Activated B cell treated with CpG ODN at 0.5 μM for 24 hours (primary cell): ENCODE measurements at regions of chr4 and their contacts with region 1.

Region 1: GRCh38 chr4:40228497-40229365 is 31.9 kb downstream of the RHOH start:
- DNase-seq: no peak
- ATAC-seq: peak; percentile 9
- H3K4me3 Mint-ChIP-seq: peak overlapping the region; percentile 25
- H3K27ac Mint-ChIP-seq: peak overlapping the region; percentile 78
- H3K4me1 Mint-ChIP-seq: peaks cover 91% of the 10 kb centered on the region
- H3K27me3 Mint-ChIP-seq: no peaks in the 10 kb centered on the region
- CTCF ChIP-seq: no peak

Region 2: GRCh38 chr4:40020221-40020943 is 208.3 kb before region 1 on chr4:
- CTCF ChIA-PET with region 1: no interaction called
- POLR2A ChIA-PET with region 1: interaction called, 10 read pairs
- intact Hi-C with region 1: no loop called
- DNase-seq: no peak
- ATAC-seq: no peak
- H3K4me3 Mint-ChIP-seq: no peak overlapping the region
- H3K27ac Mint-ChIP-seq: no peak overlapping the region
- H3K4me1 Mint-ChIP-seq: no peaks in the 10 kb centered on the region
- H3K27me3 Mint-ChIP-seq: no peaks in the 10 kb centered on the region
- CTCF ChIP-seq: no peak

Region 3: DNA sequence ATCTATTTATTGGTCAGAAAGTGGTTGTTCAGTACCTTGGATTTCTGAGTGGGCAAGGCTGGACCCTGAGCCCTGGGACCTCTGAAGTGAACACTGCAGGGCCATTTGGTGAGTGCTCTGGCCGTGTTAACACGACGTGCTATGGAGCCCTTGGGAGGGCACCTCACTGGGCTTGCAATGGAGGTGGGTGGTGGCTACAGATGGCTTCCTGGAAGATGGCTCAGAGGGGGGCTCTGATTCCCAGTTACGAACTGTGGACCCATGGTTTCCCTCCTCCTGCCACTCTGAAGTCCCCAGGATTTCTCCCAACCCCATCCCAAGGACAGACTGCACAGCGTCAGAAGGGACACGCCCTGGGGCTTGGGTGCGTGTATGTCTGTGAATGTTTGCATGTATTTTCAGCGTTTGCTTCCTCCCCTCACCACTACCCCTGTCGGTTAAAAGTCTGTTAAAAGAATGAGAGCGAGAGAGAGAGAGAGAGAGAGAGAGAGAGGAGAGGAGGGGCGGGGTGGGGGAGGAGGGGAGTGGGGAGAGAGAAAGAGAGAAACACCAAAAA is 35.6 kb before region 1 on chr4:
- CTCF ChIA-PET with region 1: interaction called, 4 read pairs
- POLR2A ChIA-PET with region 1: interaction called, 10 read pairs
- intact Hi-C with region 1: loop called (anchors 5 kb)
- DNase-seq: no peak
- ATAC-seq: peak; percentile 28
- H3K4me3 Mint-ChIP-seq: peak overlapping the region; percentile 97
- H3K27ac Mint-ChIP-seq: peak overlapping the region; percentile 95
- H3K4me1 Mint-ChIP-seq: peaks cover 83% of the 10 kb centered on the region
- H3K27me3 Mint-ChIP-seq: no peaks in the 10 kb centered on the region
- CTCF ChIP-seq: no peak

Region 4: GRCh38 chr4:40212674-40213527 is 15.8 kb before region 1 on chr4:
- CTCF ChIA-PET with region 1: interaction called, 4 read pairs
- POLR2A ChIA-PET with region 1: interaction called, 21 read pairs
- intact Hi-C with region 1: no loop called
- DNase-seq: no peak
- ATAC-seq: no peak
- H3K4me3 Mint-ChIP-seq: peak overlapping the region; percentile 42
- H3K27ac Mint-ChIP-seq: peak overlapping the region; percentile 80
- H3K4me1 Mint-ChIP-seq: peaks cover 96% of the 10 kb centered on the region
- H3K27me3 Mint-ChIP-seq: no peaks in the 10 kb centered on the region
- CTCF ChIP-seq: no peak